PC-9 (cell line): ENCODE measurements at regions of chr16 and their contacts with region 1.

Region 1: DNA sequence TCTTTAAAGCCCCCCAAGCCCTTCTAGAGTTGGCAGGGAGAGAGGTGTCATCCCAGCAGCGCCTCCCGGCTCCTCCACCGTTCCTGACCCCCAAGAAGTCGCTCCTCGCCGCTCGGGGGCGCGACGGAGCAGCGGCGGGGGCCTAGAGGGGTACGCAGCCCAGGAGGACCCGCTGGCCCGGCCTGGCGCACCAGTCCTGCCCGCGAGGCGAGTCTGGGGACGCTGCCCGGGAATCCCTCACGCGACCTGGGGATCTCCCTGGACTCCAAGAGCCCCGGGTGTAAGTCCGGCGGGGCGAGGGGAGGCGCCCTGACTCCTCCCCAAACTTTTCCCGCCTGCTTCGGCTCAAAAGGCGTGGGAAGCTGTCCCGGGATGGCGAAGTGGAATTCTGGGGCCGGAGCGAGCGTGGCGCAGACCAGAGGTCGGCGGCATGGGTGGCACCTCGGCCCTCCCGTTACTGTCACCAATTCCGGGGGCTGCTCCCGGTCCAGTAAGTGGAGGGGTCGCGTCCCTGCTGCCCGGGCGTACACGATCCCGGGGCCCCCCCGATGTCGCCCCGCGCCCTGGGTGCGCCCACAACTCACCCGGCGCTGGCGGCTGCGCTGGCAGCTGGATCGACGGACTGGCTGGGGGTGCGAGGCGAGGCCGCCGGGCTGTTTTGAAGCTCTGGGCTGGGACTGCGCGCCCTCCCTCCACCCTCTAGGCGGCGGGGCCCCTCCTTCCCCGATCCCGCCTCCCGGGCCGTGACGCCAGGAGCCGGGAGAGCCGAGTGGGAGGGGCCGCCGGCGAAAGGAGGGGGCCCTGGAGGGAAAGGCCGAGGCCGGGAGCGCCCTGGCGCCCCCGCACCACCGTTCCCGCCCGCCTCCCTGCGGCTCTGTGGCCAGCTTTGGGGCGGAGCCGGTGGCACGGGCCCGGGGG is at the start of gene EMP2:
- DNase-seq: peak; percentile 56 to 89
- H3K4me3 ChIP-seq: peak within 1 kb of the TSS; percentile 92
- H3K27ac ChIP-seq: 0 out of 2 replicates have a peak within 1 kb of the TSS, but pooled peaks have one; percentile 31
- H3K4me1 ChIP-seq: peaks cover 53% of the 10 kb centered on the region
- H3K27me3 ChIP-seq: no peaks in the 10 kb centered on the region
- CTCF ChIP-seq: peak; percentile 67; the same call in 1 of the 2 replicates
- total RNA-seq, gene EMP2: 82.5 and 137 TPM in 2 replicates

Region 2: GRCh38 chr16:10521681-10522274 is 58.4 kb before region 1 on chr16:
- CTCF ChIA-PET with region 1: interaction called, 5 read pairs
- POLR2A ChIA-PET with region 1: interaction called, 33 read pairs
- intact Hi-C with region 1: loop called (anchors 1 kb)
- DNase-seq: peak; percentile 67 to 70
- H3K4me3 ChIP-seq: no peak overlapping the region
- H3K27ac ChIP-seq: no peak overlapping the region
- H3K4me1 ChIP-seq: peaks cover 27% of the 10 kb centered on the region
- H3K27me3 ChIP-seq: no peaks in the 10 kb centered on the region
- CTCF ChIP-seq: peak; percentile 89

Region 3: DNA sequence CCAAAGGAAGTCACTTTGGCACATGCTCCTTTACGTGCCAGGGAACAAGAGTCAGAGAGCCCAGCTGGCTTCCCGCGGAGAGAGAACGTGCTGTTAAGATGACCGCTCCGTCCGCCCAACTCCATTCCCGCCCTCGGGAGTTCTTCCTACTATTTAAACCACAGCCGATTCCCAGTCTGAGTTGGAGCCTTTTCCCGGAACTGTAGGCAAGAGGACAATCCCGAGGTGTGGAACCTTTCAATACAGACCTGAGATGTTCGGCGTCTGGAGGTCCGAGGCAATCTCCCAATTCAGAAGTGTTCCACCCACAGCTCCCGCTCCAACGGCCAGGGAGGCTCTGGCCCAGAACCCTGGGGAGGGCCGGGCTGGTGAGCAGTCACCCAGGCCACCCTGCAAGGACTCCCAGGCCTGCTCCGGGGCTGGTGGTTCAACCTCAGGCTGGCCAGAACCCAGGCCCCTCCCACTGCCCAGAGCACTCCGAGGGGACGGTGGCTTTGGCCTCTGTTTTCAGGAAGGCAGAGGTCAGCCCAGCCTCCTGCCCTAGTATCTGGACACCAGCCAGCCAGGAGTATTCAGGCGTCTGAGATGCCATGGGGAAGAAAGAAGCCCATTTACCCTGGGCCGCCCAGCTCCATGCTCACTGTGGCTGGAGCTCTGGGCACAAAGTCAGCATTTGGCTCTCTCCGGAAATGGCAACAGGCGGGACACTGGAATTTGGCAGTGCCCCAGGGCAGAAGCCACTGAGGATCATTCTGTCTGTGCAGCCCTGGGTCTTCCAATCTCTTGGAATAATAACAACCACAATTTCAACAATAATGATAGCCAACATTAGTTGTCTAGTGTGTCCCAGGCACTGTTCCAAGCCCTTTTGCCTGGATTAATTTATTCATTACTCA is 21.2 kb before region 1 on chr16:
- CTCF ChIA-PET with region 1: no interaction called
- POLR2A ChIA-PET with region 1: interaction called, 4 read pairs
- intact Hi-C with region 1: loop called (anchors 2 kb)
- DNase-seq: peak; percentile 86 to 95
- H3K4me3 ChIP-seq: peak overlapping the region; percentile 52
- H3K27ac ChIP-seq: peak overlapping the region; percentile 78
- H3K4me1 ChIP-seq: peaks cover 37% of the 10 kb centered on the region
- H3K27me3 ChIP-seq: no peaks in the 10 kb centered on the region
- CTCF ChIP-seq: no peak

Region 4: DNA sequence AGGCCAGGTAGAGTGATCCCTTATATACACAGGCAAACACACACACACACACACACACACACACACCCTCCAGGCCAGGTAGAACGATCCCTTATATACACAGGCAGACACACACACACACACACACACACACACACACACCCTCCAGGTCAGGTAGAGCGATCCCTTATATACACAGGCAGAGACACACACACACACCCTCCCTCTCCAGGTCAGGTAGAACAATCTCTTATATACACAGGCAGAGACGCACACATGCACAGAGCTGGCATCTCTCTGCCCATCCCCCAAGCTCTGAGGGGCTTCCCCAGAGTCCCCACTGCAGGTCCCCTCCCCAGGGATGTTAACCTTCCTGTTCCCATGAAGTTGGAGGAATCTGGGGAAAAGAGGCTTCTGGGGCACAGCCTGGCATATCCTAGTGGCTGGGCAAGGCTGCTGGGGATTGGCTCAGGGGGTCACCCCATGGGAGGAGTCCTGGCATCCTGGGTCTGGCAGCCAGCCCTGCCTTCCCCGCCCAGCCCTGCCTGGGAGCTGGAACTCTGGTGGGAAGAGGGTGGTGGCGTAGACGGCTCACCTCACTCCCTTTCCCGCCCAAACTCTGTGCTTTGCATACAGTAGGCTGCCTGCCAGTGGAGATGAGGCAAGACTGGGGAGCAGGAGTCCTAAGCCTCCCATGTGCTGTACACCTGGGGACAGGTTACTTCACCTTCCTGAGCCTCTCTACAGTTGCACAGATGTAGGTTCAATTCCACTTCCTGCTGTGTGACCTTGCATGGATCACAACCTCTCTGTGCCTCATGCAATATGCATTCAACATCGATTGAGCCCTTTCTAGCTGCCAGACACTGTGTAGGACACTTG is 72.7 kb after region 1 on chr16:
- CTCF ChIA-PET with region 1: no interaction called
- POLR2A ChIA-PET with region 1: no interaction called
- intact Hi-C with region 1: loop called (anchors 2 kb)
- DNase-seq: peak; percentile 87 to 95
- H3K4me3 ChIP-seq: peak overlapping the region; percentile 51
- H3K27ac ChIP-seq: peak overlapping the region; percentile 73
- H3K4me1 ChIP-seq: peaks cover 8% of the 10 kb centered on the region; the same call in 1 of the 2 replicates
- H3K27me3 ChIP-seq: no peaks in the 10 kb centered on the region
- CTCF ChIP-seq: no peak

Region 5: GRCh38 chr16:10737068-10737625 is 156.9 kb after region 1 on chr16:
- CTCF ChIA-PET with region 1: no interaction called
- POLR2A ChIA-PET with region 1: no interaction called
- intact Hi-C with region 1: loop called (anchors 2 kb)
- DNase-seq: peak; percentile 67 to 70
- H3K4me3 ChIP-seq: no peak overlapping the region
- H3K27ac ChIP-seq: no peak overlapping the region
- H3K4me1 ChIP-seq: peaks cover 8% of the 10 kb centered on the region
- H3K27me3 ChIP-seq: no peaks in the 10 kb centered on the region
- CTCF ChIP-seq: peak; percentile 95